HEK293T (cell line): ENCODE measurements at regions of chr6 and their contacts with region 1.

Region 1: DNA sequence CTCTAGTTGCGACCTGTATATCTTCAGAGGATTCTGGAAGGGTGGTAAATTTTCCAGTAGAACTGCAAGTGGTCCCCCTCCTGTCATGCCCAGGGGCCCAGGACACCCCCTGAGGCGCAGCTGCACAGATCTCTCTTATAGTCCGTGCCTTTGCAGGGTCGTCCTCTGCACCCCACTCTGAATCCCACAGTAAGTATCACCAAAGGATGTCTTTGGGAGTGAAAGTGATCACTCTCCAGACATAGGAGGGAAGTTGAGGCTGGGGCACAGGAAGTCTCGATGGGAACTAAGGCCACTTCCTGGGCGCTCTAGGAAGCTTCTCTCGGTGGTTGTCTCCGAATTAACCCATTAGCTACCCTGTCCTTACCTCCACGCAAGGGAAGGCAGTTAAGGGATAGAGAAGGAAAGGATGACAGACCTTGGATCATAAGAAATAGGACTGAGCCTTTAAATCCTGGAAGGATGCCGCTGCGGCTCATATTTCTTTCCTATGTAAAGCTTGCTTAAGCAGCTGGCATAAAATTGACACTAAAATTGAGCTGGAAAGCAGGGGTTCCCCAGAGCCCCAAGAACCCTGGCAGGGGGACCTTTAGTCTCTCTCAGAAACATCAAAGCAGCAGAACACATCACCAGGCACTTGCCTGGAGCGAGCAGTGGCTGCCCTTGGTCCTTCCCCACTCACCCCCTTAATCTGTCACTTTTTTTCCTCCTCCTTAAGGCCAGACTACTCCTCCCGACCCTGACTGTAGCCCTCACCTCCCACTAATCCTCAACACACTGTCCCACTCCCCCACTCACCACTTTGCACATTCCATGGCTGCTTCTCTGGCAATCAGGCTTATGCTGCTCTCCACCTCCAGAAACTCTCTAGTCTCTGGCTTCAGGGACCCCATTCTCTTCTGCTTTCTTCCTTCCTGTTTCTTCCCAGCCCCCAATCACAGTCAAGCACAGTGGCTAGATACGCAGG is at the start of gene ZKSCAN4:
- DNase-seq: peak; percentile 88

Region 2: DNA sequence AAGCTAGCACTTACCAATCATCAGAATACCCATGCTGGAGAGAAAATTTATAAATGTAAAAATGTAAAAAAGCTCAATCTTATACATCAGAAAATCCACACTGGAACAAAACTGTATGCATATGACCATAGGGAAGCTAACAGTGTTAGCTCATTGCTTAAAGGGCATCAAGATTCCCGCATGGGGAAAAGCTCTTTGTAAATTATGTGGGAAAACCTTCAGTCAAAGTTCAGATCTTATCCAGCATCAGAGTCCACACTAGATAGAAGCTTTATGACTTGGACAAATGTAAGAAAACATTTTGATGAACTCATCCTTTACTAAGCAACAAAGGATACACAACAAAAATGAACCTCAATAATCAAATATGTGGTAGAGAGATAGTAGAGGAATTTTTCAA is 75.9 kb before region 1 on chr6:
- CTCF ChIA-PET with region 1: no interaction called
- POLR2A ChIA-PET with region 1: no interaction called
- DNase-seq: no peak

Region 3: GRCh38 chr6:28218271-28219248 is 33.7 kb before region 1 on chr6:
- CTCF ChIA-PET with region 1: no interaction called
- POLR2A ChIA-PET with region 1: interaction called, 13 read pairs
- DNase-seq: peak; percentile 67

Region 4: GRCh38 chr6:28281288-28282064 is 29.2 kb after region 1 on chr6 and contains the start of gene PGBD1:
- CTCF ChIA-PET with region 1: no interaction called
- POLR2A ChIA-PET with region 1: interaction called, 14 read pairs
- DNase-seq: peak; percentile 87